GM10248 (cell line): ENCODE measurements at regions of chr1 and their contacts with region 1.

Region 1: DNA sequence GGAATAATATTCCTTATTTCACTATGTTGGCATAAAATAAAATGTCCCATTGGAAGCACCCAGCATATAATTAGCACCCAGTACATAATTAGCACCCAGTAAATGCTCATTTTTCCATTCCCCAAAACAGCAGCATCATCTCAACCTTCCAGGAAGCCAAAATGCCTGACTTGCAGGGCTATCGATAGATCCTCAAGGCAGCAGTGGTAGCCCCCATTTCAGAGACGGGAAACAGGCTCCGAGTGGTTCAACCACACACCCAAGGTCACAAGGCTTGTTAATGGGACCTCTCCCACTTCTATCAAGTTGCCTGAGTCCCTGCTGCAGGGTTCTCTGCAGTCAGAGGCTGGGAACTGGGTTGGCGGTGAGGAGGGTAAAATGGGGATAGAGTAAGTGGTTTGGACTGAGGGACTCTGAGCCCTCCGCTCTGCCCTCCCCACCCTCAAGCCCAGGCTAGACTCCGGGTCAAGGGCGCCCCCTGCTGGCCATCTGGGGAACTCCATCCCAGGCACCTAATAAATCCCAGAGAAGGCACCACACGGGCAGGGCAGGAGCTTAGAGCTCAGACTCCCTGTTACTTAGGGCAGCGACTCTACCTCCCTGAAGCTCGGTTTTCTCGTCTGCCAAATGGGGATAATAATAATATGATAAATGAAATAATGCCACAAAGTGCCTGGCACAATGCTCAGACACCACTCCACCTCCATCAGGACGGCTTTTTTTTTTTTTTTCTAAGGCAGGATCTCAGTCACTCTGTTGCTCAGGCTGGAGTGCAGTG is 21.9 kb upstream of the LAPTM5 start:
- DNase-seq: peak; percentile 87
- CTCF ChIP-seq: peak; percentile 95

Region 2: GRCh38 chr1:30738040-30738714 is 41.3 kb before region 1 on chr1:
- CTCF ChIA-PET with region 1: interaction called, 611 read pairs
- POLR2A ChIA-PET with region 1: no interaction called
- DNase-seq: no peak
- CTCF ChIP-seq: no peak

Region 3: DNA sequence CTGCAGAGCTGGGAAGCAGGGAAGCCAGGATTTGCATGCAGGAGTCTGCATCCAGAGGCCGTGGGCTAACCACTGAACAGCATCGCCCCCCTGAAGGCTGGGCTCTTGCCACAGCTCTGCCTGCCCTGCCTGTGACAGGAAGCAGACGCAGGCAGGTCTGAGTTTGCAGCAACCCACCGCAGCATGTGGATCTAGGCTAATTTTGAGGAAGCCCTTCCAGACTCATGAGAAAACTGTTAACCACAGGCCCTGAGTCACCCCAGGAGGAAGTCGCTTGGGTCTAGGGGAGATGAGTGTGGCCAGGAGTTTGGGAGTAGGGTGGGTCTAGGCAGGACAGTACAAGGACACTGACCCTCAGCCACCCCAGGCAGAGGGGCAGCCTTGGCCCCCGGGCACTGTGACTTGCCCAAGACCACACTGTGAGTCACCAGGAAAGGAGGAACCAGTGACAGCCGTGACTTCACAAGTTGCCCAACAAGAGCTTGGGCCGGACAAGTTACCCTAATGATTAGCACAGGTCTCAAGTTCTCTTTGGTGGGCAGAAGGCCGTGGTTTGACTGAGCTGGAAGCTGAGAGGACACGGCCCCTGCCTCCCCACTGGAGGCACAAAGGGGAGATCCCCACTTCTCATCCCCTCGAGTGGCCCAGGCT is 22.8 kb before region 1 on chr1:
- CTCF ChIA-PET with region 1: interaction called, 449 read pairs
- POLR2A ChIA-PET with region 1: interaction called, 3 read pairs
- DNase-seq: no peak
- CTCF ChIP-seq: no peak

Region 4: GRCh38 chr1:30816211-30817076 is 37.0 kb after region 1 on chr1:
- CTCF ChIA-PET with region 1: interaction called, 10 read pairs
- POLR2A ChIA-PET with region 1: no interaction called
- DNase-seq: no peak
- CTCF ChIP-seq: no peak

Region 5: DNA sequence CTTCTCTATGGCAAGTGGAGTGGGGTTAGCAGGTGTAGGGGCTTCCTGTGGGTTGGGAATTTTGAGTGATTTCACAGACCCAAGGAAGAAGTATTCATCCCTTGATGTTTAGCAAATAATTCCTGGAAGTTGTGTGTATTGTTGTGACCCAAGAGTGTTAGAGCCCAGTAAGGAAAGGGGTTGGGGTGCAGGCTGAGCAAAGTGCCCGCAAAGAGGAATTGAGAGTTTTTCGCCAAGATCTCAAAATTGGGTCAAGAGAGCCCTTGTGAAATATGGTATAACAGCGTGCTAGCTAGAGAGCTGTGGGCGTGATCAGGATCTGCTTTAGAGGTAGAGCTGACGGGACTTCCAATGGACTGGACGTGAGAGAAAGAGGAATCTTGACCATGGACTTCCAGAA is 51.1 kb after region 1 on chr1:
- CTCF ChIA-PET with region 1: no interaction called
- POLR2A ChIA-PET with region 1: no interaction called
- DNase-seq: no peak
- CTCF ChIP-seq: no peak

Region 6: DNA sequence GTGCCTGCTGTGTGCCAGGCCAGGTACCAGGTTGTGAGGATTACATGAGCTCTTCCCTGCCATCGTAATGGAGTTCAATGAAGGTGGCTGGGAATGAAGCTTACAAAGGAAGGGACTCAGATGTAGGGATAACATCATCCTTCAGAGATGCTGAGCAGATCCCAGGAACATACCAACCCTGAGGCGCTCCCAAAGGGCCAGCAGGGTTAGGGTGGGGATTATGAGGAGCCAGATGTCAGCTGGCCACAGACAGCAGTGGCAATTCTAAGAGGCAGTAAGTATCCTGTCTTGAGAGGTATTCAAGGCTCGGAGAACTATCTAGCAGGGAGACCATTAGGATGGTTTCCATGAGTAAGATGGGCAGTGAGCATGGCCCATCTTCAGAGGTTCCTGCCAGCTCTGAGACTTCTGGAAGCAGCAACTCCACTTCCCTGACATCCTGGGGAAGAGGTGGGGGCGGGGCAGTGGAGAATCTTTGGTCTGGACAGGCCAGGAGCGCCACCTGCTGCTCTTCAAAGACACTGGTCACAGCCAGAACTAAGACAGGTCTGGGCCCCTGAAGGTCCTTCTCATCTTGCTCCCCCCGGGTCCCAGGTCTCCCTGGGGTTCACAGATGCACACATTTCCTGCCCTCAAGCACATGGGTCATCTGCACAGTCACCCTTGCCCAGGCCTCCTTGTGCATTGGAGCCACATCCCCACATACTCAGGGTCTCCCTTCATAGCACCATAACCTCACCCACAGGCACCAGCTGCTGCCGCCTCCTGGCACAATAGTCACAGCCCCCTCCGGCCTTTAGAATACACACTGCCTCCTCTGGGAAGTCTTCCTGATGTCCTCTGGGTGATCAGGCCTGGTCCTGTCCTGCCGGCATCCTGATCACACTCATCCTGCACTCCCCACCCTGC is 131.8 kb after region 1 on chr1:
- CTCF ChIA-PET with region 1: interaction called, 70 read pairs
- POLR2A ChIA-PET with region 1: no interaction called
- DNase-seq: peak; percentile 78
- CTCF ChIP-seq: peak; percentile 74